Naive thymus-derived CD4-positive, alpha-beta T cell (primary cell): ENCODE measurements at regions of chrX and their contacts with region 1.

Region 1: GRCh38 chrX:154478728-154479622 is at the start of gene LAGE3:
- DNase-seq: peak; percentile 85 to 97 (median 94)
- ATAC-seq: peak; percentile 97
- H3K4me3 ChIP-seq: peak within 1 kb of the TSS; percentile 79
- H3K4me3 Mint-ChIP-seq: peak within 1 kb of the TSS; percentile 81 to 94 (median 82)
- H3K27ac ChIP-seq: peak within 1 kb of the TSS; percentile 90
- H3K27ac Mint-ChIP-seq: peak within 1 kb of the TSS; percentile 59 to 92 (median 88)
- H3K4me1 ChIP-seq: peaks cover 4 to 14% of the 10 kb centered on the region in 2 donors
- H3K4me1 Mint-ChIP-seq: peaks cover 12 to 44% (median 23%) of the 10 kb centered on the region in 7 donors
- H3K27me3 ChIP-seq: no peaks in the 10 kb centered on the region
- H3K27me3 Mint-ChIP-seq: no peaks in the 10 kb centered on the region
- total RNA-seq, gene LAGE3: 11.6 to 57.0 (median 20.4) TPM

Region 2: GRCh38 chrX:154411322-154411980 is 67.5 kb before region 1 on chrX and contains the start of gene TAFAZZIN:
- CTCF ChIA-PET with region 1: no interaction called
- POLR2A ChIA-PET with region 1: interaction called, 7 read pairs
- intact Hi-C with region 1: loop called in 1 of 2 experiments (anchors 5 kb)
- DNase-seq: peak; percentile 48 to 79 (median 73)
- ATAC-seq: peak; percentile 83
- H3K4me3 ChIP-seq: peak within 1 kb of the TSS; percentile 67
- H3K4me3 Mint-ChIP-seq: peak within 1 kb of the TSS; percentile 85 to 97 (median 90)
- H3K27ac ChIP-seq: peak within 1 kb of the TSS; percentile 79
- H3K27ac Mint-ChIP-seq: peak within 1 kb of the TSS; percentile 90 to 97 (median 94)
- H3K4me1 ChIP-seq: peaks cover 6 to 7% of the 10 kb centered on the region in 2 donors
- H3K4me1 Mint-ChIP-seq: peaks cover 9 to 22% (median 14%) of the 10 kb centered on the region in 7 donors
- H3K27me3 ChIP-seq: no peaks in the 10 kb centered on the region
- H3K27me3 Mint-ChIP-seq: no peaks in the 10 kb centered on the region
- total RNA-seq, gene TAFAZZIN: 90.9 to 130 (median 108) TPM

Region 3: GRCh38 chrX:154443992-154444754 is 34.8 kb before region 1 on chrX and contains the start of gene FAM50A:
- CTCF ChIA-PET with region 1: no interaction called
- POLR2A ChIA-PET with region 1: interaction called, 3 read pairs
- intact Hi-C with region 1: loop called in 1 of 2 experiments (anchors 5 kb)
- DNase-seq: peak; percentile 38 to 81 (median 53)
- ATAC-seq: peak; percentile 91
- H3K4me3 ChIP-seq: peak within 1 kb of the TSS; percentile 55
- H3K4me3 Mint-ChIP-seq: peak within 1 kb of the TSS; percentile 53 to 84 (median 78)
- H3K27ac ChIP-seq: peak within 1 kb of the TSS; percentile 74
- H3K27ac Mint-ChIP-seq: peak within 1 kb of the TSS in 6 of 9 donors; percentile 71 to 88 (median 78)
- H3K4me1 ChIP-seq: peaks cover 6 to 14% of the 10 kb centered on the region in 2 donors
- H3K4me1 Mint-ChIP-seq: peaks cover 0 to 29% (median 10%) of the 10 kb centered on the region in 7 donors
- H3K27me3 ChIP-seq: no peaks in the 10 kb centered on the region
- H3K27me3 Mint-ChIP-seq: no peaks in the 10 kb centered on the region
- total RNA-seq, gene FAM50A: 47.2 to 76.5 (median 49.3) TPM

Region 4: DNA sequence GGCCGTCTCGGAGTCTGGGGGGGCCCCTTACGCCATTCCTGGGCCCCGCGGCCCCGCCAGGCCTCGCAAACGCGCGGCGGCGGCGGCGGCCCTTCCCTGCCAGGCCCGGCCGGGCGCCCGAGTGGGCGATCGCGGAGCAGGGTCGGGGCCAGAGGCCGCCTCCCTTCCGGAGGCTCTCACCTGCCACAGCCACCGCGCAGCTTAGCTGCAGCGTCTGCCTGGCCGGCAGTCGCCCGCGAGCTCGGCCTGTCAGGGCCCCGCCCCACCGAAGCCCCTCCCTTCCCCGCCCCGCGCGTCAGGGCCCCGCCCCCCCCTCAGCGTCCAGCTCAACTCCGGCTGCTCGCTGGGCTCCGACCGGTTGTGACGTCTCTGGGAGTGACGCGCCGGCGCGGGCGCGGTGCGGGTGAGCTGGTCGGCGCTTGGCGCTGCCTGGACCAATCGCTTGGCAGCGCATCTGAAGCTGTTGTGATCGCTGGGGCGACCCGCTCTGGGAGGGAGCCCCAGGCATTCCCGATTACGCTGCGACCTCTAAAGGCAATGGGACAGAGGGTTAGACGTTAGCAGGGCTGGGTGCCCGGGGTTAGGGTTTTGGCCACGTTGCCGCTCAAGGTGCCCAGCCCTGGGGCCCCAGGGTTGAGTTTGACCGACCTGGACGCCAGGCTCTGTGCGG is 11.6 kb after region 1 on chrX and contains the start of gene SLC10A3:
- CTCF ChIA-PET with region 1: no interaction called
- POLR2A ChIA-PET with region 1: interaction called, 28 read pairs
- intact Hi-C with region 1: loop called (anchors 1 kb)
- DNase-seq: peak; percentile 70 to 87 (median 77)
- ATAC-seq: peak; percentile 93
- H3K4me3 ChIP-seq: peak within 1 kb of the TSS; percentile 74
- H3K4me3 Mint-ChIP-seq: peak within 1 kb of the TSS; percentile 78 to 92 (median 88)
- H3K27ac ChIP-seq: peak within 1 kb of the TSS; percentile 90
- H3K27ac Mint-ChIP-seq: peak within 1 kb of the TSS; percentile 81 to 96 (median 91)
- H3K4me1 ChIP-seq: peaks cover 0 to under 1% of the 10 kb centered on the region in 2 donors
- H3K4me1 Mint-ChIP-seq: peaks cover 0 to 23% (median 17%) of the 10 kb centered on the region in 7 donors
- H3K27me3 ChIP-seq: no peaks in the 10 kb centered on the region
- H3K27me3 Mint-ChIP-seq: no peaks in the 10 kb centered on the region
- total RNA-seq, gene SLC10A3: 11.7 to 22.7 (median 19.0) TPM

Region 5: GRCh38 chrX:154526901-154527675 is 48.1 kb after region 1 on chrX:
- CTCF ChIA-PET with region 1: interaction called, 3 read pairs
- POLR2A ChIA-PET with region 1: interaction called, 5 read pairs
- intact Hi-C with region 1: loop called in 1 of 2 experiments (anchors 2 kb)
- DNase-seq: peak in 8 of 9 donors; percentile 29 to 55 (median 46)
- ATAC-seq: peak; percentile 93
- H3K4me3 ChIP-seq: no peak overlapping the region
- H3K4me3 Mint-ChIP-seq: peak overlapping the region in 8 of 10 donors; percentile 28 to 72 (median 43)
- H3K27ac ChIP-seq: peak overlapping the region; percentile 50
- H3K27ac Mint-ChIP-seq: peak overlapping the region; percentile 38 to 85 (median 80)
- H3K4me1 ChIP-seq: peaks cover 5 to 23% of the 10 kb centered on the region in 2 donors
- H3K4me1 Mint-ChIP-seq: peaks cover 7 to 28% (median 20%) of the 10 kb centered on the region in 7 donors
- H3K27me3 ChIP-seq: no peaks in the 10 kb centered on the region
- H3K27me3 Mint-ChIP-seq: no peaks in the 10 kb centered on the region